Posterior vena cava (tissue), 2 donors: ENCODE measurements at regions of chr5 and their contacts with region 1.

Region 1: GRCh38 chr5:32489791-32490582 is 45.4 kb upstream of the ZFR start:
- DNase-seq: peak; percentile 91

Region 2: GRCh38 chr5:32462618-32463017 is 27.4 kb before region 1 on chr5:
- intact Hi-C with region 1: no loop called
- DNase-seq: no peak

Region 3: GRCh38 chr5:32585446-32586275 is 95.7 kb after region 1 on chr5 and contains the start of gene SUB1:
- intact Hi-C with region 1: loop called (anchors 5 kb)
- DNase-seq: peak; percentile 98
- total RNA-seq, gene SUB1: 151 to 179 TPM

Region 4: GRCh38 chr5:32613050-32613672 is 123.2 kb after region 1 on chr5:
- intact Hi-C with region 1: loop called in 1 of 2 experiments (anchors 10 kb)
- DNase-seq: peak; percentile 90